ENCODE measurements at regions of chr20 and their contacts with region 1.

Region 1: GRCh38 chr20:41635158-41635557 is 17.0 kb upstream of the CHD6 start:
- DNase-seq: no peak
- H3K4me3 ChIP-seq: no peak overlapping the region
- H3K27ac ChIP-seq: no peak overlapping the region
- H3K4me1 ChIP-seq: no peaks in the 10 kb centered on the region
- CTCF ChIP-seq: no peak

Region 2: DNA sequence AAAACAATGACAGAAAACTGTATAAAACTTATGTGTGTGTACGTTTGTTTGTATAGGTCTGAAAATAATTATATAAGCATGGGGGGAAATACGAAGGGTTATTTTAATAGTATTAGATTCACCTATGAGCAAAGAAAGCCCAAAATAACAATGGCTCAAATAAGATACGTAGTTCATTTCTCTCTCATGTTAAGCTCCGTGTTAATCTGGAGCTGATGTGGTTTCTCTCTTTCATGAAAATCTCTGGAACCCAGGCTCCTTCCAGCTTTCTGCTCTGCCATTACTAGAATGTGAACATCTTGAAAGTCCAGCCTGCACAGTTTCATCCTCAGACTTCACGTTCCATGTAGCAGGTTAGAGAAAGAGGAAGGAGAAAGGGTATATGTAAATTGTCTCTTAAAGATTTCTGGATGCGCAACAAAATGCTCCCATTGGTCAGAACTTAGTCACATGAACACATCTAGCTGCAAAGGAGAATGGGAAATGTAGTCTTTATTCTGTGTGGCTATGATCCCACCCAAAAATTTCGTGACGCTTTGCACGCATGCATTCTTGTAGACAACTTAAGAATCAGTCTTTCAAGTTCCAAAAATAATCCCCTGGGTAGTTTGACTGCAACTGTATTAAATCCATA is 29.3 kb after region 1 on chr20:
- CTCF ChIA-PET with region 1: no interaction called
- POLR2A ChIA-PET with region 1: interaction called, 3 read pairs
- intact Hi-C with region 1: loop called (anchors 1 kb)
- DNase-seq: peak; percentile 82
- H3K4me3 ChIP-seq: peak overlapping the region; percentile 62
- H3K27ac ChIP-seq: no peak overlapping the region
- H3K4me1 ChIP-seq: peaks cover 4% of the 10 kb centered on the region
- CTCF ChIP-seq: no peak